ENCODE measurements at regions of chr4 and their contacts with region 1.

Region 1: GRCh38 chr4:2441393-2442174 is 22.8 kb downstream of the CFAP99 start:
- DNase-seq: peak; percentile 80
- ATAC-seq: peak; percentile 97
- H3K4me3 ChIP-seq: peak overlapping the region in 1 of 3 experiments; percentile 38; a peak in 1 of 6 replicates
- H3K27ac ChIP-seq: no peak overlapping the region
- H3K4me1 ChIP-seq: peaks cover 27% of the 10 kb centered on the region
- H3K27me3 ChIP-seq: peaks cover 2 to 22% of the 10 kb centered on the region in 2 experiments; a peak in 4 of 5 replicates
- CTCF ChIP-seq: peak; percentile 97
- EP300 ChIP-seq: no peak
- POLR2A ChIP-seq: no peak
- RAD21 ChIP-seq: peak; percentile 94

Region 2: GRCh38 chr4:2220016-2220630 is 221.5 kb before region 1 on chr4:
- CTCF ChIA-PET with region 1: interaction called, 17 read pairs
- POLR2A ChIA-PET with region 1: no interaction called
- in situ Hi-C with region 1: no loop called
- intact Hi-C with region 1: loop called (anchors 1 kb)
- DNase-seq: peak; percentile 61
- ATAC-seq: peak; percentile 92
- H3K4me3 ChIP-seq: no peak overlapping the region
- H3K27ac ChIP-seq: no peak overlapping the region
- H3K4me1 ChIP-seq: peaks cover 9% of the 10 kb centered on the region
- H3K27me3 ChIP-seq: no peaks in the 10 kb centered on the region
- CTCF ChIP-seq: peak; percentile 96
- EP300 ChIP-seq: no peak
- POLR2A ChIP-seq: no peak
- RAD21 ChIP-seq: peak; percentile 83

Region 3: DNA sequence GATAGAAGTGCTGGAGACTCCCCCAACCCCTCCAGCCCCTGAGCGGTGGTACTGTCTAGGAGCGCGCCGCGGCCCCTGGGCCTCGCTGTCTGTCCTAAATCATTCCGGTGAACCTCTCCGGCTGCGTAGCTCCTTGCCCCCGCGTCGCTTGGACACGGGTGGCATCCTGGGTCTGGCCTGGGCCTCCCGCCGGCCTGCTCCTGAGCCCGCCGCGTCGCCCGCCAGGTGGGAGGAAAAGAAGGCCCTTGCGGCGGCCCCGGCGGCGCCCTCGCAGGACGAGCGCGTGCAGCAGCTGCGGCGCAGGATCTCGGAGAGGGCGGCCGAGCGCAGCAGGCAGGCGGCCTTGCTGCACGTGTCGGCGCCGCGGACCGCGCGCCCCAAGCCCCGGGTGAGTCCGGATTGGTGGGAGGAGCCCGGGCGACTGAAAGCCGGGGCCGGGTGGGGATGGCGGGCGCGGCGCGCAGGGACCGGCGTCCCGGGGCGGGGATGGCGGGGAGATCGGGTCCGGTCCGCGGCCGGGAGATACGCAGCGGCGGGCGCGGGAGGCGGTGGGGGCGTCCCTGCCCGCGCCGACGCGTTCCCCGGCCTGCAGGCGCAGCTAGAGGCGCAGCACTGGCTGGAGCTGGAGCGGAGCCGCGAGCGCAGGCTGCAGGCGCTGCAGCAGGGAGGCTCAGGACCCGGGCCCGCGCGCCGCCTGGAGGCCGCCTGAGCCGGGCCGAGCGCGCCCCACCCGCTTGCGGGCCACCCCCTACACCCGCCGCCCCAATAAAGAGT is 20.8 kb after region 1 on chr4:
- CTCF ChIA-PET with region 1: interaction called, 6 read pairs
- POLR2A ChIA-PET with region 1: no interaction called
- in situ Hi-C with region 1: no loop called
- intact Hi-C with region 1: loop called (anchors 2 kb)
- DNase-seq: peak; percentile 30
- ATAC-seq: peak; percentile 91
- H3K4me3 ChIP-seq: peak overlapping the region; percentile 37 to 66 (median 48); a peak in 4 of 6 replicates
- H3K27ac ChIP-seq: no peak overlapping the region
- H3K4me1 ChIP-seq: peaks cover 45% of the 10 kb centered on the region
- H3K27me3 ChIP-seq: peaks cover 6 to 43% of the 10 kb centered on the region in 2 experiments
- CTCF ChIP-seq: peak; percentile 60
- EP300 ChIP-seq: no peak
- POLR2A ChIP-seq: no peak
- RAD21 ChIP-seq: peak; percentile 79

Region 4: GRCh38 chr4:2537011-2537830 is 95.6 kb after region 1 on chr4:
- CTCF ChIA-PET with region 1: no interaction called
- POLR2A ChIA-PET with region 1: no interaction called
- in situ Hi-C with region 1: no loop called
- intact Hi-C with region 1: no loop called
- DNase-seq: peak; percentile 44
- ATAC-seq: no peak
- H3K4me3 ChIP-seq: peak overlapping the region; percentile 84 to 92 (median 91)
- H3K27ac ChIP-seq: peak overlapping the region; percentile 80
- H3K4me1 ChIP-seq: peaks cover 27% of the 10 kb centered on the region
- H3K27me3 ChIP-seq: no peaks in the 10 kb centered on the region; a peak in 1 of 5 replicates
- CTCF ChIP-seq: no peak
- EP300 ChIP-seq: no peak
- POLR2A ChIP-seq: peak in 1 of 2 experiments; percentile 66; a peak in 2 of 4 replicates
- RAD21 ChIP-seq: no peak

Region 5: GRCh38 chr4:2811830-2812611 is 370.4 kb after region 1 on chr4:
- CTCF ChIA-PET with region 1: no interaction called
- POLR2A ChIA-PET with region 1: no interaction called
- in situ Hi-C with region 1: no loop called
- intact Hi-C with region 1: no loop called
- DNase-seq: peak; percentile 59
- ATAC-seq: peak; percentile 68
- H3K4me3 ChIP-seq: peak overlapping the region in 1 of 3 experiments; percentile 36; a peak in 3 of 6 replicates
- H3K27ac ChIP-seq: peak overlapping the region; percentile 44
- H3K4me1 ChIP-seq: peaks cover 43% of the 10 kb centered on the region
- H3K27me3 ChIP-seq: no peaks in the 10 kb centered on the region
- CTCF ChIP-seq: no peak
- EP300 ChIP-seq: no peak
- POLR2A ChIP-seq: no peak
- RAD21 ChIP-seq: no peak